Ovary (tissue), 10 donors: ENCODE measurements at regions of chr11 and their contacts with region 1.

Region 1: GRCh38 chr11:76670485-76671236 is at the start of gene LRRC32:
- DNase-seq: peak; percentile 61 to 81 (median 75)
- H3K4me3 ChIP-seq: peak within 1 kb of the TSS; percentile 65
- H3K27ac ChIP-seq: peak within 1 kb of the TSS in 1 of 2 donors; percentile 54
- H3K4me1 ChIP-seq: peaks cover 16% of the 10 kb centered on the region
- H3K27me3 ChIP-seq: no peaks in the 10 kb centered on the region
- CTCF ChIP-seq: no peak
- EP300 ChIP-seq: no peak
- POLR2A ChIP-seq: no peak
- total RNA-seq, gene LRRC32: 3.2 to 47.1 (median 29.5) TPM

Region 2: DNA sequence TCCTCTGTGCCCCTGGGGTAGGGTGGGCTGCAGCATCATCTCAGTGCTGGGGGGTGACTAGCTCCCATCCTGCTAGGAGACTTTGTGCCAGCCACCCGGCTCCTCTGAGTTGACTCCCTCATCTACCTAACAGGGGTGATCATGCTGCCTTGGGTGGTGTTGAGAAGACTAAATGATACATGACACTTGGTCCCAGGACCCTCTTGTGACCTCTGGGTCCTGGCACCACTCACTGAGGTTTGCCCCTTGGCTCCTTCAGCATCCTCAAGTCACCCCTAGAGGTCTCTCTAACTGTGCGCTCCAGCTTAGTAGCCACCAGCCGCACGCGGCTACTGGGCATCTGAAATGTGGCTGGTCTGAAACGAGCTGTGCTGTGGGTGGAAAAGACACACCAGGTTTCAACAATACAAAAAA is 72.2 kb before region 1 on chr11:
- intact Hi-C with region 1: loop called in 3 of 4 experiments (anchors 5 to 10 kb)
- DNase-seq: peak in 1 of 5 donors; percentile 33
- H3K4me3 ChIP-seq: no peak overlapping the region
- H3K27ac ChIP-seq: no peak overlapping the region
- H3K4me1 ChIP-seq: peaks cover 10% of the 10 kb centered on the region
- H3K27me3 ChIP-seq: no peaks in the 10 kb centered on the region
- CTCF ChIP-seq: no peak
- EP300 ChIP-seq: no peak
- POLR2A ChIP-seq: no peak

Region 3: GRCh38 chr11:76752321-76753185 is 81.9 kb after region 1 on chr11:
- intact Hi-C with region 1: no loop called
- DNase-seq: peak; percentile 94 to 97 (median 95)
- H3K4me3 ChIP-seq: no peak overlapping the region
- H3K27ac ChIP-seq: peak overlapping the region; percentile 67 to 94
- H3K4me1 ChIP-seq: peaks cover 11% of the 10 kb centered on the region
- H3K27me3 ChIP-seq: no peaks in the 10 kb centered on the region
- CTCF ChIP-seq: no peak
- EP300 ChIP-seq: peak; percentile 17
- POLR2A ChIP-seq: no peak